ENCODE measurements at regions of chr2 and their contacts with region 1.

Region 1: GRCh38 chr2:98649135-98649991 is 41.0 kb downstream of the UNC50 start:
- DNase-seq: peak; percentile 68
- ATAC-seq: peak; percentile 95 to 96

Region 2: GRCh38 chr2:98795891-98796676 is 146.7 kb after region 1 on chr2:
- intact Hi-C with region 1: no loop called
- DNase-seq: no peak
- ATAC-seq: peak in 1 of 2 donors; percentile 35

Region 3: GRCh38 chr2:98835831-98836385 is 186.5 kb after region 1 on chr2:
- intact Hi-C with region 1: loop called (anchors 1 to 2 kb)
- DNase-seq: no peak
- ATAC-seq: no peak

Region 4: DNA sequence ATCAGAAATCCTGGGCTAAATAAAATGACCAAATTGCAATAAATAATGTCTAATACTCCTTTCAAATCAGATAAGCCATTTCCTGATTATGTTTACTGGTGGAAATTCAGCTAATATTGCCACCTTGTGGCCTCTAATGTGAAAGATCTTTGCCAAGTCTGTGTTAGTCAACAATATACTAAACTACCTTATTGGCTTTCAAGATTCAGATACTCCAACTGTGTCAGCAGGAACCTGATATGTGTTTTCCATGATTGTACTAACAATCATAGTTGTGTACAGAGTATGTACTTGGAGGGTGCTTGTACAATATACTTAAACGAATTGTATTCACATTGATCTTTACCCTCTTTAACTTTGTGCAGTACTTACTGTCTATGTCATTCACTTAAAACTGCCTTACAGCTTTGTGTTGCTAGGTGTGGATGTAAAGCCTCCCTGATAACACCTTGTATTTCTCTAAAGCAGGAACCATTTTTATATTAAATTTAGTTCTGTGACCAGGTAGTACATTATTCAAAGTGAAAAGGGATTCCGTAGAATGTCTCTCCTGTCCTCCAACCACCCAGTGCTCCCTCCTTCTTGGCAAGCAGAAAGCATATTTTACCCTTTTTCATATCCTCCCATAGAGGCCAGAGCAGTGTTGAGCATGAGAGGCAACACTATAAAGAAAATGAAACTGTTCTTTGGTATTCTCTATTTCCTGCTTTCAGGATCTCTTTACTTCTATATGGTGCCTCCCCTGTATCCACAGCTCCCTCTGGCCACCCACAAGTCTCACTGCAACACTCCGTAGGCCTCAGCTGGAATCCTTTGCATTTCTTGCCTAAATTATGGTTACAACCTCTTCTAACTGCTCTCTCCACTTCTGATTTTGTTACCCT is 417.0 kb after region 1 on chr2:
- intact Hi-C with region 1: loop called in 1 of 2 experiments (anchors 10 kb)
- DNase-seq: no peak
- ATAC-seq: peak; percentile 30 to 93

Measured in left cardiac atrium (tissue), 4 donors.